ENCODE measurements at regions of chr19 and their contacts with region 1.

Region 1: DNA sequence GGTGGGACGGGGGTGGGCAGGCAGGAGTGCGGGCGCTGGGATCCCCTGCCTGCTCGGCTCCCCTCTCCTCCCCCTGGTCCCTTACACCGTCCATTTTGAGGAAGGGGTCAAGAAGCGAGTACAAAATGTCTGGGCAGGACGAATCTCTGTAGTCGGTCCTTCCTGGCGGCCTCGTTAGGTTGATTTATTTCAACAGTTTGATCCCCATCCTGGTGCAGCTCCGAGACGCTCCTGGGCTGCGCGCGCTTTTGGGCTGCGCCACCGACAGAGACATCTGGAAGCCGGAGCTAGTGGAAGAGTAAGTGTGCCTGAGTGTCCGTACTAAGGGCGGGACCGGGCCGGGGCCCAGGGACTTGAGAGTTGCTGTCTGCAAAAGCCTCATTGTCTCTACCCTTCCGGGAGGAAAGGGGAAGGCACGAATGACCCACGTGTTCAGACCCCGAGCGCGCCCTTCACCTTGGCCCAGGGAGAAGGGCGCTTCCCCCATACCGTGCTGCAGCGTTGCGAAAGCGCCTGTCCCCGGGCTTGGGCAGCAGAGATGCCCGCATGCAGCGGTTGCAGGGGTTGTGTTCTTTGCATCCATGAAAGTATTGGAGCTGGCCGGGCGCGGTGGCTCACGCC is 1.8 kb downstream of the ZNF114 start:
- DNase-seq: no peak
- H3K4me3 ChIP-seq: peak overlapping the region; percentile 60
- H3K27ac ChIP-seq: no peak overlapping the region
- H3K27me3 ChIP-seq: no peaks in the 10 kb centered on the region
- CTCF ChIP-seq: no peak

Region 2: GRCh38 chr19:48290771-48291488 is 19.3 kb after region 1 on chr19:
- CTCF ChIA-PET with region 1: interaction called, 37 read pairs
- POLR2A ChIA-PET with region 1: interaction called, 3 read pairs
- DNase-seq: no peak
- H3K4me3 ChIP-seq: peak overlapping the region; percentile 63
- H3K27ac ChIP-seq: peak overlapping the region; percentile 83
- H3K27me3 ChIP-seq: no peaks in the 10 kb centered on the region
- CTCF ChIP-seq: peak; percentile 98

Region 3: GRCh38 chr19:48308631-48309586 is 37.3 kb after region 1 on chr19:
- CTCF ChIA-PET with region 1: interaction called, 10 read pairs
- POLR2A ChIA-PET with region 1: no interaction called
- DNase-seq: no peak
- H3K4me3 ChIP-seq: no peak overlapping the region
- H3K27ac ChIP-seq: no peak overlapping the region
- H3K27me3 ChIP-seq: peaks cover 7% of the 10 kb centered on the region
- CTCF ChIP-seq: peak; percentile 46

Region 4: DNA sequence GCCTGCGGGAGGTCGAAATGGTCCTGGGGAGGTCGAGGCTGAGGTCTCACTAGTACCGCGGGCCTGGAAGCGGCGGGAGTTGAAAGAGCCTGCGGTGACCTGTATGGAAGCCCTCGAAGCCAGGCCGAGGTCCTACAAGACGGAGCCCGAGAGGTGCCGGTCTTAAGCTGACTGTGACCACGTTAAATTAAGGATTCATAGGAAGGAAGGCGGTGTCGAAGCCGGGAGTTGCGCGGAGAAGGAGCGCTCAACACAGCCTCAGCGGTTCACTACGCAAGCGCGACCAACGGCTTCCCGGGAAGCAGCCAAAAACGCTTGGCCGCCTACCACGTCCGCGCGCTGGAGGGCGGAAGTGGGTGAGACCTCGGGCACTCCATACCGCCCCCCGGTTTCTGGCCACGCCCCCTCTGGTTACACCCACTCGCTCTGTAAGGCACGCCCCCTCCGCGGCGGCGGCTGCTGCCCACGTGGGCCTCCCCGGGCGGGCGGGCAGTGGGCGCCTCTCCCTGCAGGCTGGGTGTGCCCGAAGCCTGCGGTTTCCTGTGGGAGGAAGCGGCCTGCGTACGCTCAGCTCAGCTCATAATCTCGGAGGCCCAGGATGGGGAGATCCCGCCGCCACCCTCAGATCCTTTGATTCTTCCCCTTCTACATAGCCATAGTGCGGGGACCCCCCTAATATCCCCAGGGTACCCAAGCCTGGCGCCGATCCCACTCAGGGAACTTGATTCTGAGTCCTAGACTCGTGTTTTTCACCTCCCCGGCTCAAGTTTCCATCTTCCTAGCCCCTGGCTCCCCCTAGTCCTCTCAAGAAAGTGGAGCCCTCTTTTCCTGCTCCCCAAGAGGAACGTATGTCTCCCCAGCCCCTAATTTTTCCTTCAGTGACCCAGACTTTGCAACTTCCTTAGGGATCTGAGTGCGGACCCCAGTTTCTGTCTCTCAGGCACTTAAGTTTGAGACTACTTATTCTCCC is 50.3 kb after region 1 on chr19:
- CTCF ChIA-PET with region 1: interaction called, 4 read pairs
- POLR2A ChIA-PET with region 1: interaction called, 16 read pairs
- DNase-seq: peak; percentile 97
- H3K4me3 ChIP-seq: peak overlapping the region; percentile 63
- H3K27ac ChIP-seq: peak overlapping the region; percentile 98
- H3K27me3 ChIP-seq: no peaks in the 10 kb centered on the region
- CTCF ChIP-seq: no peak